PC-9 (cell line): ENCODE measurements at regions of chr1 and their contacts with region 1.

Region 1: GRCh38 chr1:160607011-160607671 is 27.8 kb upstream of the CD84 start:
- DNase-seq: peak; percentile 31 to 68
- H3K4me3 ChIP-seq: no peak overlapping the region
- H3K27ac ChIP-seq: no peak overlapping the region
- H3K4me1 ChIP-seq: no peaks in the 10 kb centered on the region
- H3K27me3 ChIP-seq: peaks cover 26% of the 10 kb centered on the region; the same call in 1 of the 2 replicates
- CTCF ChIP-seq: peak; percentile 84

Region 2: DNA sequence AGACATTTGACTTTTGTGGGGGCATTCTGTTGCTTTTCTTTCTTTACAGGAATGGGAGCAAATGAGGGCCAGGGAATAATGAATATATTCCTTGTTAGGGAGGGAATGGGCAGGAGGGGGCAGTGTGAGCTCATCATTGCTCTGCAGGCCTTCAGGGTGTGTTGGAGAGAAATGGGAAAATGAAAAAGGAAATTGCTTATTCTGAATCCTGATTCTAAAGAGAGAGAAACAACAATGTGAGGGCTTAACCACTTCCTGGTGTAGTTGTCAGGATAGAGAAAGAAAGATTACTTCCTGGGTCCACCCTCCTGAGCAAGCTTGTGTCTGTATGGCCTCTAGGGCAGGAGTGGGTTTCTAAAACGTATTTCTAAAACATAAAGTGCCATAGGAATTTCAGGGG is 178.5 kb before region 1 on chr1:
- CTCF ChIA-PET with region 1: interaction called, 3 read pairs
- POLR2A ChIA-PET with region 1: no interaction called
- intact Hi-C with region 1: loop called (anchors 1 kb)
- DNase-seq: peak in 1 of 2 experiments; percentile 31
- H3K4me3 ChIP-seq: no peak overlapping the region
- H3K27ac ChIP-seq: no peak overlapping the region
- H3K4me1 ChIP-seq: no peaks in the 10 kb centered on the region
- H3K27me3 ChIP-seq: no peaks in the 10 kb centered on the region; the same call in none of the 2 replicates
- CTCF ChIP-seq: peak; percentile 68

Region 3: DNA sequence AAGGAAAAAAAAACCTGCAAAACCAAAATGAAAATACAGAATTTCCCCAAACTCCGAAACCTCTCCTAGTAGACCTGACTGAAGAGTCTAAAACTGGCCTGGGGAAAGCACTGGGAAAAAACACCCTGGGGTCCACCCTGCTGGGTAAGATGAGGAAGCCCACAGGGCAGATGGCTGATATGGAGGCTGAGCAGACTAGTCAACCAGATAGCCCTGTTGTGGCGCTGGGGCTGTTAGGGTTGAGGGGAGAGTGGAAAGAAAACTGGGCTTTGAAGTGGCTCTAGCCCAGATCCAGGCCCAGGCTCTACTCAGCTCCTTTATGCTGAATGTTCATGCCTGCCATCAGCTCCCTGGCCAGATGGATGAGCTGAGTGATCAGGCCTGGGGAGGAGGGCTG is 46.5 kb after region 1 on chr1:
- CTCF ChIA-PET with region 1: no interaction called
- POLR2A ChIA-PET with region 1: no interaction called
- intact Hi-C with region 1: no loop called
- DNase-seq: no peak
- H3K4me3 ChIP-seq: no peak overlapping the region
- H3K27ac ChIP-seq: no peak overlapping the region
- H3K4me1 ChIP-seq: no peaks in the 10 kb centered on the region
- H3K27me3 ChIP-seq: peaks cover 74% of the 10 kb centered on the region
- CTCF ChIP-seq: no peak